ENCODE measurements at regions of chr16 and their contacts with region 1.

Region 1: DNA sequence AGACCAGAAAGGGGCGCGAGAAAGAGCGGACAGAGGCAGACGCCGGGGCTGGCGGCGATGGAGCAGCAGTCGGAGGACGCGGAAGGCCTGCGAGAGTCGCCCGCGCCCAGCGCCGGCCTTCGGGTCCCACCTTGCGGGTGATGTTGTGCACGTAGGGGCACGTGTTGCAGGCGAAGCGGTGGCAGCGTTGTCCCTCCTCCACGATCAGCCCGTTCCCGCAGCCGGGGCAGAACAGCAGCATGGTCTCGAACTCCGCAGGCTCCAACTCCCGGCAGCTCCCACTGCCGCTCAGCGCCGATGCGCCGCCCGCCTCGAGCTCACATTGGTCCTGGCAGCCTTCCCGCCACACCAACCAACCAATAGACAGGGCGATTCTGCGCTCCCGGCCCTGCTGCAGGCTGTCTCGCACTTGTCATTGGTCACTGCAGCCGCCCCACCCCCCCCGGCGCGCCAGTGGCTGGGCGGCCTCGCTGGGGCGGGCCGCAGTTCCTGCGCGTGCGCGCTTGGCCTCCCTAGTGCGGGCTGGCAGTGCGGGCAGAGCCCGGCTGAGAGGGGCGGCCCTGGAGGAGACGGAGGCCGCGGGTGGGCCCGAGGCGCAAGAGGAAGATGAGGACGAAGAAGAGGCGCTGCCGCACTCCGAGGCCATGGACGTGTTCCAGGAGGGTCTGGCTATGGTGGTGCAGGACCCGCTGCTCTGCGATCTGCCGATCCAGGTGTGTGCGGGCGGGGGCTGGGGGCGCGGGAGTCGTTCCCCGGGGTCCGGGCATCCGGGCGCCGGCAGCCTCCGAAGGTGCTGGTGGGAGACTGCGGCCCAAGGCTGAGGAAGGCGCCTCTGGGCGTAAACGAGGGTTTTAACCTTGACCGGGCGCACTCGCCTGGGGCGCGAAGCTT is at the starts of genes POLR3K and SNRNP25:
- DNase-seq: peak; percentile 96
- H3K4me3 Mint-ChIP-seq: peak within 1 kb of the TSS; percentile 97
- H3K27ac Mint-ChIP-seq: peak within 1 kb of the TSS; percentile 85
- H3K4me1 Mint-ChIP-seq: peaks cover 20% of the 10 kb centered on the region
- H3K27me3 Mint-ChIP-seq: no peaks in the 10 kb centered on the region
- total RNA-seq, gene POLR3K: 64.8 and 67.3 TPM in 2 replicates
- total RNA-seq, gene SNRNP25: 77.5 and 83.1 TPM in 2 replicates

Region 2: DNA sequence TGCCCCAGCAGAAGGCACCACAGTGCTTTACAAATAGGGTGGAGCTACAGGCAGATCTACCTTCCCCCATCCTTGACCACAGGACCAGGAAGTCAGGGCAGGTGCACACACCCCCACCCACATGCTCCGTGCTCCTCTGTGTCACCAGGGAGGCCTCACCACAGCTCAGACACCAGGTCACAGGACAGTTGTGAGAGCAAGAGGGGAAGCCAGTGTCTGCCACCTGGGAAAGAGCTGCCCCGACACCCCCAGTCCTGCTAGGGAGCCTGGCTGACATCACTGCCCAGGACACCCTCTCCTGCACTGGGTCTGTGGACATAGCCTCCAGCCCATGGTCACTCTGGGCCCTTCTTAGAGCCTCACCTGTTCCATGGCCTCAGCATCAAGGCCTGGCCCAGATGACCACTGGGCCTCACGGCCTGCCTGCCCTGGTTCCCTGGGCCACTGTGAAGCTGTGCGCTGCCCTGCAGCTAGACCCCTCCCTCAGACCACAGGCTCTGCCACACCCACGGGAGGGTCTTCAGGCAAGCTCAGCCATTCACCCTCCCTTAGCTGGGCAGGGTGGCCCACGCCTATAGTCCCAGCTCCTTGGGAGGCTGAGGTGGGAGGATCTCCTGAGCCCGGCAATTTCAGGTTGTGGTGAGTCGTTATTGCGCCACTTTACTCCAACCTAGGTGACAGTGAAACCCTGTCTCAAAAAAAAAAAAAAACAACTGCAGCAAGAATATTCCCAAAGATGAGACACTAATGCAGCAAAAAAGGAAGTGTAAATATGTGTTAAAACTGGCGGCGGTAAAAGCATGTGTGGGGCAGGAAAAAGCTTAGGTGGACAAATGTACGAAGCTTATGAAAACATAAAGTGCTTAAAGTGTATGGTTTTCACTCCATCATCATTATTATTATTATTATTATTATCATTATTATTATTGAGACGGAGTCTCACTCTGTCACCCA is 14.4 kb before region 1 on chr16:
- intact Hi-C with region 1: no loop called
- DNase-seq: peak; percentile 49
- H3K4me3 Mint-ChIP-seq: no peak overlapping the region
- H3K27ac Mint-ChIP-seq: no peak overlapping the region
- H3K4me1 Mint-ChIP-seq: peaks cover 26% of the 10 kb centered on the region
- H3K27me3 Mint-ChIP-seq: no peaks in the 10 kb centered on the region

Region 3: GRCh38 chr16:65671-66137 is 12.1 kb after region 1 on chr16:
- intact Hi-C with region 1: loop called (anchors 1 kb)
- DNase-seq: peak; percentile 76
- H3K4me3 Mint-ChIP-seq: no peak overlapping the region
- H3K27ac Mint-ChIP-seq: no peak overlapping the region
- H3K4me1 Mint-ChIP-seq: peaks cover 7% of the 10 kb centered on the region
- H3K27me3 Mint-ChIP-seq: peaks cover 21% of the 10 kb centered on the region

Region 4: DNA sequence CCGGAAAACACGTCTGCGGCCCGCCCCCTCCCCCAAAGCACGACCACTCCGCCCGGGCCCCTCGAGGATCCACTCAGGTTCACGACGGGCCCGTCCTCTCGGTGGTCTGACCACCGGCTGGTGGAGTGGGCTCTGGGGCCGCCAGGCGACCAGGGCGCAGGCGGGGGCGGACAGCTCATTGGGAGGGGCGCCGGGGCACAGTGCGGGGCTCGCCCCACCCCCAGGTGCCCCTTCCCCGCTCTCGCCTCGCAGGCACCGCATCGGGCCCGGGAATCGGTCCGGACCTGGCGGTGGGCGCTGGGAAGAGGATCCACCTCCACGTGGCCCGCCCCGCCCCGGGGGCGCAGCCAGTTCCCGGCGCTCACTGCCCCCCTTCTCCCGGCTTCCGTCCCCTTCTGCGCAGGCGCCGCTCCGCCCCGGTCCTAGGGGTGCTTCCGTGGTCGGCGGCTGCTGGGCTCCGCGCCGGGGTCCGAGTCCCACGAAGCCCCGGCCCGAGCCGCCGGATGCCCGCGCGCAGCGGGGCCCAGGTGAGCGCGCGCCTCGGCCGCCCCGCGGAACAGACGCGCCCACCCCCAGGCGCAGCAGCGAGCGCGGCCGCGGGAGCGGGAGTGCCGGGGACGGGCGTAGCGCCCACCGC is 24.3 kb after region 1 on chr16 and contains the start of gene MPG:
- intact Hi-C with region 1: loop called (anchors 2 kb)
- DNase-seq: peak; percentile 81
- H3K4me3 Mint-ChIP-seq: peak within 1 kb of the TSS; percentile 92
- H3K27ac Mint-ChIP-seq: peak within 1 kb of the TSS; percentile 83
- H3K4me1 Mint-ChIP-seq: peaks cover 24% of the 10 kb centered on the region
- H3K27me3 Mint-ChIP-seq: peaks cover 21% of the 10 kb centered on the region
- total RNA-seq, gene MPG: 77.7 and 78.6 TPM in 2 replicates

Measured in activated T-helper 2 cell treated with anti-CD3 and anti-CD28 coated beads, Interferon-gamma antibody, Interleukin-2, Interleukin-4, amounts not matched to agents 10 μg/mL and 5 μg/mL and 100 μg/mL, durations not matched to agents 14 hours and 24 hours and 36 hours (primary cell).